Natural killer cell (primary cell): ENCODE measurements at regions of chr17 and their contacts with region 1.

Region 1: GRCh38 chr17:44708401-44709181 is at the start of gene DBF4B:
- DNase-seq: peak; percentile 74 to 95
- ATAC-seq: peak; percentile 93 to 98 (median 98)
- H3K4me3 ChIP-seq: peak within 1 kb of the TSS; percentile 76
- H3K4me3 Mint-ChIP-seq: no peak within 1 kb of the TSS
- H3K27ac ChIP-seq: peak within 1 kb of the TSS; percentile 4
- H3K27ac Mint-ChIP-seq: no peak within 1 kb of the TSS
- H3K4me1 ChIP-seq: peaks cover 10% of the 10 kb centered on the region
- H3K4me1 Mint-ChIP-seq: no peaks in the 10 kb centered on the region
- H3K27me3 ChIP-seq: no peaks in the 10 kb centered on the region
- H3K27me3 Mint-ChIP-seq: peaks cover 3 to 9% of the 10 kb centered on the region in 2 donors
- CTCF ChIP-seq: no peak
- total RNA-seq, gene DBF4B: 3.0 to 4.1 (median 4.1) TPM

Region 2: GRCh38 chr17:44689477-44690217 is 18.9 kb before region 1 on chr17 and contains the start of gene CCDC43:
- intact Hi-C with region 1: loop called (anchors 1 kb)
- DNase-seq: peak; percentile 89 to 96
- ATAC-seq: peak; percentile 99
- H3K4me3 ChIP-seq: peak within 1 kb of the TSS; percentile 72
- H3K4me3 Mint-ChIP-seq: peak within 1 kb of the TSS; percentile 100
- H3K27ac ChIP-seq: peak within 1 kb of the TSS; percentile 72
- H3K27ac Mint-ChIP-seq: peak within 1 kb of the TSS; percentile 92 to 98
- H3K4me1 ChIP-seq: peaks cover 16% of the 10 kb centered on the region
- H3K4me1 Mint-ChIP-seq: peaks cover 19 to 25% of the 10 kb centered on the region in 2 donors
- H3K27me3 ChIP-seq: no peaks in the 10 kb centered on the region
- H3K27me3 Mint-ChIP-seq: no peaks in the 10 kb centered on the region
- CTCF ChIP-seq: no peak
- total RNA-seq, gene CCDC43: 20.2 to 26.9 (median 23.7) TPM